Activated B cell treated with CpG ODN at 0.5 μM for 24 hours (primary cell): ENCODE measurements at regions of chr15 and their contacts with region 1.

Region 1: GRCh38 chr15:73700041-73700842 is 16.1 kb downstream of the CD276 start:
- DNase-seq: peak; percentile 38
- ATAC-seq: peak; percentile 55
- H3K4me3 Mint-ChIP-seq: no peak overlapping the region
- H3K27ac Mint-ChIP-seq: no peak overlapping the region
- H3K4me1 Mint-ChIP-seq: peaks cover 11% of the 10 kb centered on the region
- H3K27me3 Mint-ChIP-seq: peaks cover 28% of the 10 kb centered on the region
- CTCF ChIP-seq: no peak

Region 2: GRCh38 chr15:73240866-73241499 is 459.3 kb before region 1 on chr15:
- CTCF ChIA-PET with region 1: interaction called, 42 read pairs
- POLR2A ChIA-PET with region 1: no interaction called
- intact Hi-C with region 1: loop called (anchors 1 kb)
- DNase-seq: peak; percentile 23
- ATAC-seq: no peak
- H3K4me3 Mint-ChIP-seq: no peak overlapping the region
- H3K27ac Mint-ChIP-seq: no peak overlapping the region
- H3K4me1 Mint-ChIP-seq: no peaks in the 10 kb centered on the region
- H3K27me3 Mint-ChIP-seq: peaks cover 9% of the 10 kb centered on the region
- CTCF ChIP-seq: peak; percentile 98

Region 3: GRCh38 chr15:73284090-73284716 is 416.0 kb before region 1 on chr15:
- CTCF ChIA-PET with region 1: interaction called, 9 read pairs
- POLR2A ChIA-PET with region 1: no interaction called
- intact Hi-C with region 1: loop called (anchors 1 kb)
- DNase-seq: no peak
- ATAC-seq: no peak
- H3K4me3 Mint-ChIP-seq: no peak overlapping the region
- H3K27ac Mint-ChIP-seq: no peak overlapping the region
- H3K4me1 Mint-ChIP-seq: peaks cover 22% of the 10 kb centered on the region
- H3K27me3 Mint-ChIP-seq: peaks cover 2% of the 10 kb centered on the region
- CTCF ChIP-seq: no peak

Region 4: GRCh38 chr15:73305331-73306211 is 394.7 kb before region 1 on chr15:
- CTCF ChIA-PET with region 1: no interaction called
- POLR2A ChIA-PET with region 1: interaction called, 3 read pairs
- intact Hi-C with region 1: loop called (anchors 1 kb)
- DNase-seq: no peak
- ATAC-seq: peak; percentile 62
- H3K4me3 Mint-ChIP-seq: no peak overlapping the region
- H3K27ac Mint-ChIP-seq: no peak overlapping the region
- H3K4me1 Mint-ChIP-seq: peaks cover 10% of the 10 kb centered on the region
- H3K27me3 Mint-ChIP-seq: peaks cover 2% of the 10 kb centered on the region
- CTCF ChIP-seq: no peak

Region 5: GRCh38 chr15:73560501-73561117 is 139.6 kb before region 1 on chr15:
- CTCF ChIA-PET with region 1: interaction called, 22 read pairs
- POLR2A ChIA-PET with region 1: no interaction called
- intact Hi-C with region 1: no loop called
- DNase-seq: no peak
- ATAC-seq: peak; percentile 40
- H3K4me3 Mint-ChIP-seq: no peak overlapping the region
- H3K27ac Mint-ChIP-seq: no peak overlapping the region
- H3K4me1 Mint-ChIP-seq: no peaks in the 10 kb centered on the region
- H3K27me3 Mint-ChIP-seq: no peaks in the 10 kb centered on the region
- CTCF ChIP-seq: no peak

Region 6: DNA sequence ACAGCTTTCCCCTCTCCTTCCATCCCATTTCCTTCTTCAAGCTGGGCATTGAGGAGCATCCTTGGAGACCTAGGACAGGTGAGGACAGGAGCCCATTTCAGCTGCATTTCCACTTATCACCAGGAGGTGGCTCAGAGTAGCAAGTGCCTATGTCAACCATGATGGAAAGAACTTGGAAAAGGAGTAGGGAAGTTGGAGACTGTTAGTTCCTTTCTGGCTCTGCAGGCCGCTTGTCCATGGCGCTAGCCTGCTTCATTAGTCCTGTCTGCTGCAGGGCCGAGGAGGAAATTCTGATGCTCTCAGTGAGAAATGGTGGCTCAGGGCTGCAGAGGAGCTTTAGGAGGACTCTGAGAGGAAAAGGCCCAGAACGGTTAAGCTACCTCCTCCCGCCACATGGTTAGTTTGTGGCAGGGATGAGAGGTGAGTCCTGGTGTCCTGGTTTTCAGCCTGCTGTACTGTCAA is 23.1 kb before region 1 on chr15:
- CTCF ChIA-PET with region 1: interaction called, 42 read pairs
- POLR2A ChIA-PET with region 1: no interaction called
- intact Hi-C with region 1: loop called (anchors 1 kb)
- DNase-seq: no peak
- ATAC-seq: peak; percentile 34
- H3K4me3 Mint-ChIP-seq: no peak overlapping the region
- H3K27ac Mint-ChIP-seq: no peak overlapping the region
- H3K4me1 Mint-ChIP-seq: no peaks in the 10 kb centered on the region
- H3K27me3 Mint-ChIP-seq: peaks cover 30% of the 10 kb centered on the region
- CTCF ChIP-seq: peak; percentile 36

Region 7: GRCh38 chr15:73844356-73844755 is 144.1 kb after region 1 on chr15:
- CTCF ChIA-PET with region 1: no interaction called
- POLR2A ChIA-PET with region 1: no interaction called
- intact Hi-C with region 1: no loop called
- DNase-seq: no peak
- ATAC-seq: no peak
- H3K4me3 Mint-ChIP-seq: no peak overlapping the region
- H3K27ac Mint-ChIP-seq: no peak overlapping the region
- H3K4me1 Mint-ChIP-seq: no peaks in the 10 kb centered on the region
- H3K27me3 Mint-ChIP-seq: peaks cover 5% of the 10 kb centered on the region
- CTCF ChIP-seq: no peak